ENCODE measurements at regions of chr13 and their contacts with region 1.

Region 1: DNA sequence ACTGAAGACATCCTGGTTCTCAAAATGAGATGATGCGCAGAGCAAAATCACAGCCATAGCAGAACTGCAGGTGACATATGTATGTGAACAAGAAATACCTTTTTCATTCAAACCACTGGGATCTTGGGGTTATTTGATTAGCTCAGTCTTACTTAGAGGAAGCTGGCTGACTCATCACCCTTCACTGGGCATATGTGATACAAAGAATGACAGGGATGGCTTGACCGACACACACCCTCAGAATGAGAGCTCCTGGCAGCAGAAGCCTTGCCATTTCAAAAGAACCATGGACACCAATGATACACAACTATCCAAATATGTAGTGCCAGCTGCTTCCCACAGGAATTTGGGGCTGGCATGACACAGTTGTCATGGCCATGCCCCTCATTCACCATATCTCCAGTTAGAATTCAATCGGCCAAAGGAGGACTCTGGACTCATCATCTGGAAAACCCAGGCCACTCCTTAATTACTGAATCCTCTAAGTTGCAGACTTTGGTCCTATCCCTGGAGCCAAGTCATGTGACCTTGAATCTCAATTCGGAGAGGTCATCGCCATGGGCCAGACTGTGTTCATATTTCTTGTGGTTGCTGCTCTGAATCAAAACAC is 115.8 kb downstream of the KATNAL1 start:
- DNase-seq: peak; percentile 47
- ATAC-seq: peak; percentile 84
- H3K4me3 ChIP-seq: no peak overlapping the region
- H3K27ac ChIP-seq: no peak overlapping the region
- H3K4me1 ChIP-seq: no peaks in the 10 kb centered on the region
- H3K27me3 ChIP-seq: no peaks in the 10 kb centered on the region
- CTCF ChIP-seq: no peak

Region 2: GRCh38 chr13:29713839-29714238 is 477.8 kb before region 1 on chr13:
- CTCF ChIA-PET with region 1: no interaction called
- POLR2A ChIA-PET with region 1: interaction called, 23 read pairs
- intact Hi-C with region 1: no loop called
- DNase-seq: peak; percentile 63
- ATAC-seq: 0 out of 2 replicates have a peak, but pooled peaks have one; percentile 18
- H3K4me3 ChIP-seq: no peak overlapping the region
- H3K27ac ChIP-seq: no peak overlapping the region
- H3K4me1 ChIP-seq: no peaks in the 10 kb centered on the region
- H3K27me3 ChIP-seq: peaks cover 53% of the 10 kb centered on the region
- CTCF ChIP-seq: peak; percentile 91

Region 3: DNA sequence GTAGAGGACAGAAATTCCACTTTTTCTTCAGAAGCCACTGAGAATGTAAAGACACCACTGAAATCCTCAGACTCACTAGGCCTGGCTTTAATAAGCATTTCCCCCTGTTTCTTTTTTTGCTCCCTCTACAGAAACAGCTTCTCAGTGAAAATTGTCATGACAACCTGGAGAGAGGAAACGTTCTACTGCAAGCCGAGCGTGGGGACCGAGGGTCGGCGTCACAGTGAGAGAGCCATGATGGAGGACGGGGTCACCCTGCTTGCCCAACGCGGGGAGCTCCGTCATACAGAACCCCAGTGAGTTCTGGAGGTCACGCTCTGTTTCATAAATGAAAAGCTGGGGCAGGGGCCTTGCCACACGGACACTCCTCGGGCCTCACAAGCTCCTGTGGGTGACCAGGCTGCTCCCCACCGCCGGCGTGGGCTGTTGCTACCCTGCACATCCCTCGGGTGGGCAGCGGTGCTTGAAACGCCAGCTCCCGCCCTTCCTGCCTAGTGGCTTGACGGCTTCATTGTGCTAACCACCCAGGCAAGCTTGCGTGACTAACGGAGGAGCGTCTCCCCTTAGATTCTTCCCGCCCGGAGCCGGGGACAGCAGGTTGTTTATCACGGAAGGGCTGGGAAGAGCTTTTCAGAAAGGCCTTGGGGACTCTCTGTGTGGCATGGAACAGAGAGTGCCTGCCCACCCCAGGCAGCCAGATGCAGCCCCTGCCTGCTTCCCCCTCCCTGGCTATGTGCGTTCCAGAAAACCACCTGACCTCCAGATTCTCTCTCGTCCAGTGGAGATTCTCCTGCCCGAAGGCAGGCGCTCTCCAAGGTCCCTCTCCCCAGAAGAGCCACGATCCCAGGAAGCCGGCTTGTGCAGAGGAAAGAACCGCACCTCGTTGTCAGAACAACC is 37.8 kb before region 1 on chr13:
- CTCF ChIA-PET with region 1: no interaction called
- POLR2A ChIA-PET with region 1: no interaction called
- intact Hi-C with region 1: no loop called
- DNase-seq: no peak
- ATAC-seq: no peak
- H3K4me3 ChIP-seq: no peak overlapping the region
- H3K27ac ChIP-seq: no peak overlapping the region
- H3K4me1 ChIP-seq: peaks cover 9% of the 10 kb centered on the region; the same call in 1 of the 2 replicates
- H3K27me3 ChIP-seq: no peaks in the 10 kb centered on the region
- CTCF ChIP-seq: no peak

Region 4: DNA sequence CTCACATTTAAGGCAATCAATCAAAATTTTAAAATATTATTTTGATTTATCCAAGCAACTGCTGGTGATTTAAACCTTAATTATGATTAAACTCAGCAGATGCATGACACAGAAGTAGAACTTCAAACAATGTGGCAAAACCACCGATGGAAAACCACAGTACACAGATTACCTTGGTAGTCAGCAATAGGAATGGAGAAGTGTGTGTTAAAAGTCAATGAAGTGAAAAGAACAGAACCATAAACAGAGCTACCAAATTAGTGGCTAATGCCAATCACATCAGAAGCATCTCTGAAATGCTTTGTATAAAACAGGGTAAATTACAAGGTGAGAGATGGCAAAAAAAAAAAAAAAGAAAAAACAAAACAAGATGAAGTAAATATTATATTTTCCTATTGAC is 84.6 kb after region 1 on chr13:
- CTCF ChIA-PET with region 1: no interaction called
- POLR2A ChIA-PET with region 1: no interaction called
- intact Hi-C with region 1: no loop called
- DNase-seq: no peak
- ATAC-seq: no peak
- H3K4me3 ChIP-seq: no peak overlapping the region
- H3K27ac ChIP-seq: no peak overlapping the region
- H3K4me1 ChIP-seq: no peaks in the 10 kb centered on the region
- H3K27me3 ChIP-seq: no peaks in the 10 kb centered on the region
- CTCF ChIP-seq: no peak

Region 5: GRCh38 chr13:30334663-30335386 is 143.2 kb after region 1 on chr13:
- CTCF ChIA-PET with region 1: no interaction called
- POLR2A ChIA-PET with region 1: no interaction called
- intact Hi-C with region 1: no loop called
- DNase-seq: peak; percentile 44
- ATAC-seq: no peak
- H3K4me3 ChIP-seq: no peak overlapping the region
- H3K27ac ChIP-seq: no peak overlapping the region
- H3K4me1 ChIP-seq: peaks cover 30% of the 10 kb centered on the region
- H3K27me3 ChIP-seq: no peaks in the 10 kb centered on the region
- CTCF ChIP-seq: peak; percentile 59

Measured in PC-3 (cell line).